ENCODE measurements at regions of chr4 and their contacts with region 1.

Region 1: DNA sequence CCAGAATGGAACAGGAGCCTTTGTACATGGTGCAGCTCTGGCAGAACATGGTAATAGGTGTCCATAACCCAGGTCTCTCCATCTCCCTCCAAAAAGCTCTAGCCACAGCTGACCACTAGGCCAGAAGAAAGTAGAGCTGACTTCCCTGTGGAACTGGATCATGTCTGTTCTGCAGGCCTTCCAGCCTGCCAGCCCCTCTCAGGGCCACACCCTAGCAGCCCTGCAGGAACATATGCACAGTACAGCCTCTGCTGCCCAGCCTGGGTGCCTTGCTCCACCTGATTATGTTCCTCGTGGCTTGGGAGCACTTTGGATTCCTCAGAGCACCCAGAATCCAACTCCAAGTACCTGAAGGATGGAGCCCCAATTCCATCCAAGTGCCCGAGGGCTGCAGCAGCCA is 12.0 kb downstream of the NDST3 start:
- DNase-seq: no peak
- H3K4me3 ChIP-seq: no peak overlapping the region
- H3K27ac ChIP-seq: no peak overlapping the region
- H3K4me1 ChIP-seq: no peaks in the 10 kb centered on the region
- H3K27me3 ChIP-seq: no peaks in the 10 kb centered on the region
- CTCF ChIP-seq: no peak
- EP300 ChIP-seq: no peak
- POLR2A ChIP-seq: no peak
- RAD21 ChIP-seq: no peak

Region 2: DNA sequence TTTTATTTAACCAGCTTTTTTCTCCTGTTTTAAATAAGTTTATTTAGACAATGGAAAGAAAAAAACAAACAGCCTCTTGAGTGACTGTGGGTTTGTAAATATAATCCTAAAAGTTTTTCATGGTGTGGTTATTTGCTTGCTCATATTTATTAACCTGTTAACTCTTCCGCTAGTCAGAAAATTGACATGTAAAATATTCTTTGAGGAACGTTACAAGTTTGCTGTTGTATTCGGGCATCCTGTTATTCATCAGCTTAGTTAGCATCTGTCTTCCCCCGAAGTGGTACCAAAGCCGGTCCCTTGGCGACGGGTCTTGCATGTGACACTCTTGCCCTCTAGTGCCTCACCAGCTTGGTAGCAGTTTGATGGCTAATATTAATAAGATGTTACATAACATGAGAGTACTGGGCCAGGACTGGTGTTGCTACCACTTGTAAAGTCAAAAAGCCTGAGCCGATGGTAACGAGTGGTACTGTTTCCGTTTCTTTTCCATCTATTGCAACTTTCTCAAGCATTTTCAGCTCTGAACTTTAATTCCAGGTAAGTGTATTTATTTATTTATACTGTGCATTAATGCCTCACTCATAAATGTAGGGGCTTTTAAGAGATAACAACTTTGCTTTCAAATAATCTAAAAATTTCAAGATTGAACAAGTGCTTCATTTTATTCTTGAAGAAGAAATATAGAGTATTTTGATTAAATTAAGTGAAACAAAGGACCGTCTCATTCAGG is 12.1 kb before region 1 on chr4 and contains the start of gene NDST3:
- CTCF ChIA-PET with region 1: interaction called, 10 read pairs
- POLR2A ChIA-PET with region 1: no interaction called
- DNase-seq: peak in 1 of 2 experiments; percentile 64
- H3K4me3 ChIP-seq: peak within 1 kb of the TSS; percentile 53 to 80 (median 55)
- H3K27ac ChIP-seq: no peak within 1 kb of the TSS
- H3K4me1 ChIP-seq: no peaks in the 10 kb centered on the region; a peak in 1 of 7 replicates
- H3K27me3 ChIP-seq: peaks cover 0 to 2% (median under 1%) of the 10 kb centered on the region in 4 experiments; a peak in 1 of 7 replicates
- CTCF ChIP-seq: peak; percentile 63 to 82 (median 82)
- EP300 ChIP-seq: no peak
- POLR2A ChIP-seq: no peak
- RAD21 ChIP-seq: peak; percentile 97 to 98
- total RNA-seq, gene NDST3: 0.60 and 0.71 TPM in 2 replicates

Region 3: DNA sequence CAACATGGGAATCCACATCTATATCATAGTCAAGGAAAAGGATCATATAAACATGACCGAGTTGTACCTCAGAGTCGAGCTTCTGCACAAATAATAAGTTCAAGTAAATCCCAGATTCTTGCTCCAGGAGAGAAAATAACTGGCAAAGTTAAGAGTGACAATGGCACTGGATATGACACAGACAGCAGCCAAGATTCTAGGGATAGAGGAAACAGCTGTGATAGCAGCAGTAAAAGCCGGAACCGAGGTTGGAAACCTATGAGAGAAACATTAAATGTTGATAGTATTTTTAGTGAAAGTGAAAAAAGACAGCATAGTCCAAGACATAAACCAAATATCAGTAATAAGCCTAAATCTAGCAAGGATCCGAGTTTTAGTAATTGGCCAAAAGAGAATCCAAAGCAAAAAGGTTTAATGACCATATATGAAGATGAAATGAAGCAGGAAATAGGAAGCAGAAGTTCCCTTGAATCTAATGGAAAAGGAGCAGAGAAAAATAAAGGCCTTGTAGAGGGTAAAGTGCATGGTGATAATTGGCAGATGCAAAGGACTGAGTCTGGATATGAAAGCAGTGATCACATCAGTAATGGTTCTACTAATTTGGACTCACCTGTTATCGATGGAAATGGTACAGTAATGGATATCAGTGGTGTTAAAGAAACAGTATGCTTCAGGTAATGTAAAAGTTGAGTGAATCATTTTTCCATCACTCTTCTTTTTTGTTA is 1225.2 kb after region 1 on chr4:
- CTCF ChIA-PET with region 1: no interaction called
- POLR2A ChIA-PET with region 1: no interaction called
- DNase-seq: no peak
- H3K4me3 ChIP-seq: no peak overlapping the region
- H3K27ac ChIP-seq: no peak overlapping the region
- H3K4me1 ChIP-seq: no peaks in the 10 kb centered on the region
- H3K27me3 ChIP-seq: no peaks in the 10 kb centered on the region
- CTCF ChIP-seq: no peak
- EP300 ChIP-seq: no peak
- POLR2A ChIP-seq: no peak
- RAD21 ChIP-seq: no peak

Measured in H1 (cell line).